CD8-positive, alpha-beta T cell (primary cell): ENCODE measurements at regions of chr2 and their contacts with region 1.

Region 1: DNA sequence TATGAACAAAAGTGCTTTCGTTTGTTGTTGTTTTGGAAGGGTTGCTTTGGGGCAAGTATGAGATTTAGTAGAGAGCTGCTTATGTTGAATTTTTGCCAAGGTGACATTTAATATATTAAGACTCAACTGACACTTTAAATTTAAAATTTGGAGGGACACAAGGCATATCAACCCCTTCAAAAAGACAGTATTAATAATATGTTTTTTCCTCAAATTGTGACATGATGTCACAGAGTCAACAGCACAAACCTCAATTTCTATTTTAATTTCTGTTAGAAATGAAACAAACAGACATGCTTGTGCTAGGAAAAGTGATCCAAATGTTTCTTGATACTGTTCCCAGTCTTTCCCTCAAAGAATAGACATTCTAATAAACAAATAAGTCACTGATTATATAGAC is 218.9 kb downstream of the CYRIA start:
- DNase-seq: no peak
- ATAC-seq: no peak
- H3K4me3 ChIP-seq: no peak overlapping the region
- H3K4me3 Mint-ChIP-seq: no peak overlapping the region
- H3K27ac ChIP-seq: no peak overlapping the region
- H3K27ac Mint-ChIP-seq: no peak overlapping the region
- H3K4me1 ChIP-seq: no peaks in the 10 kb centered on the region
- H3K4me1 Mint-ChIP-seq: no peaks in the 10 kb centered on the region
- H3K27me3 ChIP-seq: no peaks in the 10 kb centered on the region
- H3K27me3 Mint-ChIP-seq: peaks cover under 1% of the 10 kb centered on the region
- CTCF ChIP-seq: no peak

Region 2: DNA sequence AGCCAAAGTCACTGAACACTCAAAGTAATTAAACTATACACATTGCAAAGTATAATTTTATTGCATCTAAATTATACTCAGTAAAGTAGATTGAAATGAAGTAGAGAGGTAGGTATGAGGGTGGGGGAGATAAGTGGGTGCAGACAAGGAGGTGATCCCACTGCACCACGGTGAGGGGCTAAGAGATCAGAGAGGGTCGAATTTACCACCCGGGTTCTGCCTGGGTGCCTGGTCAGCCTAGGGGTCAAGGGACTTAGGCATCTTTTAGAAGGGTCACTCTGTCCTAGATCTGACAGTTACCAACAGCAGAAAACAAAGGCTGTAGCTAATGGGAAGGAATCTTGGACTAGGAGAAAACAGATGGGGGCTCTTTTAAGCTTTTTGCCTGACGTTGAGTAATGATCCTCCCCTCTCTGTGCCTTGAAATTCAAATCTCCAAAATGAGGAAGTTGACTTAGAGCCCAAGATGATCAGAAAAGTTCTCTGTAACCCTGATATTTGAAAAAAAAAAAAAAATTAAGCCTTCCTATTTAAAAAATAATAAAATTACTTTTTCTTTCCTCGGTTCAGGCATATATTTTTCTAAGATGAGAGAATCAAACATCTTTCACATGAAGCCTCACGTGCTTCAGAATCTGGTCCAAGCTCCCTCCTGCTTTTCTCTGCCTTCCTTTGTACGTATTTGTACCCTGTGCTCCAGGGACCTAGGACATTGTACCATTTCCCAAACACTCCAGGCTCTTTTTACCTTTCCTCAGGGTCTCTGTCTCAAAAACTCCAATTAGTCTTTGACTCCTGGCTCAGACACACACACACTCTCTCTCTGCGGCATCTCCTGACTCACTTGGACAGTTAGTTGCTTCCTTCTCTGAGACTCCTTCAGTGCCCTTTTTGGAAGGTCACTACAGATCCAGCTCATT is 134.9 kb before region 1 on chr2:
- CTCF ChIA-PET with region 1: no interaction called
- POLR2A ChIA-PET with region 1: no interaction called
- intact Hi-C with region 1: no loop called
- DNase-seq: no peak
- ATAC-seq: no peak
- H3K4me3 ChIP-seq: no peak overlapping the region
- H3K4me3 Mint-ChIP-seq: no peak overlapping the region
- H3K27ac ChIP-seq: no peak overlapping the region
- H3K27ac Mint-ChIP-seq: no peak overlapping the region
- H3K4me1 ChIP-seq: no peaks in the 10 kb centered on the region
- H3K4me1 Mint-ChIP-seq: no peaks in the 10 kb centered on the region
- H3K27me3 ChIP-seq: no peaks in the 10 kb centered on the region
- H3K27me3 Mint-ChIP-seq: no peaks in the 10 kb centered on the region
- CTCF ChIP-seq: no peak

Region 3: GRCh38 chr2:16525265-16525887 is 78.7 kb after region 1 on chr2:
- CTCF ChIA-PET with region 1: no interaction called
- POLR2A ChIA-PET with region 1: no interaction called
- intact Hi-C with region 1: no loop called
- DNase-seq: peak in 2 of 9 experiments; percentile 6 to 19
- ATAC-seq: no peak
- H3K4me3 ChIP-seq: no peak overlapping the region
- H3K4me3 Mint-ChIP-seq: no peak overlapping the region
- H3K27ac ChIP-seq: no peak overlapping the region
- H3K27ac Mint-ChIP-seq: no peak overlapping the region
- H3K4me1 ChIP-seq: no peaks in the 10 kb centered on the region
- H3K4me1 Mint-ChIP-seq: no peaks in the 10 kb centered on the region
- H3K27me3 ChIP-seq: no peaks in the 10 kb centered on the region
- H3K27me3 Mint-ChIP-seq: peaks cover 6% of the 10 kb centered on the region
- CTCF ChIP-seq: no peak

Region 4: GRCh38 chr2:16817305-16818179 is 370.8 kb after region 1 on chr2:
- CTCF ChIA-PET with region 1: no interaction called
- POLR2A ChIA-PET with region 1: no interaction called
- intact Hi-C with region 1: loop called in 1 of 2 experiments (anchors 5 kb)
- DNase-seq: no peak
- ATAC-seq: no peak
- H3K4me3 ChIP-seq: no peak overlapping the region
- H3K4me3 Mint-ChIP-seq: no peak overlapping the region
- H3K27ac ChIP-seq: no peak overlapping the region
- H3K27ac Mint-ChIP-seq: no peak overlapping the region
- H3K4me1 ChIP-seq: no peaks in the 10 kb centered on the region
- H3K4me1 Mint-ChIP-seq: no peaks in the 10 kb centered on the region
- H3K27me3 ChIP-seq: no peaks in the 10 kb centered on the region
- H3K27me3 Mint-ChIP-seq: no peaks in the 10 kb centered on the region
- CTCF ChIP-seq: no peak